Endothelial cell of umbilical vein (primary cell): ENCODE measurements at regions of chr3 and their contacts with region 1.

Region 1: GRCh38 chr3:7309641-7310102 is 448.8 kb downstream of the GRM7 start:
- DNase-seq: peak; percentile 98
- H3K4me3 ChIP-seq: no peak overlapping the region
- H3K27ac ChIP-seq: peak overlapping the region; percentile 96
- H3K4me1 ChIP-seq: peaks cover 55% of the 10 kb centered on the region
- H3K27me3 ChIP-seq: no peaks in the 10 kb centered on the region
- CTCF ChIP-seq: no peak
- POLR2A ChIP-seq: no peak

Region 2: GRCh38 chr3:7285505-7285904 is 24.2 kb before region 1 on chr3:
- CTCF ChIA-PET with region 1: interaction called, 7 read pairs
- POLR2A ChIA-PET with region 1: interaction called, 4 read pairs
- dilution Hi-C with region 1: no loop called
- intact Hi-C with region 1: loop called (anchors 1 kb)
- DNase-seq: peak; percentile 49
- H3K4me3 ChIP-seq: no peak overlapping the region
- H3K27ac ChIP-seq: no peak overlapping the region
- H3K4me1 ChIP-seq: peaks cover 28% of the 10 kb centered on the region
- H3K27me3 ChIP-seq: no peaks in the 10 kb centered on the region
- CTCF ChIP-seq: peak in 1 of 2 donors; percentile 14
- POLR2A ChIP-seq: no peak

Region 3: GRCh38 chr3:7382293-7383010 is 72.8 kb after region 1 on chr3:
- CTCF ChIA-PET with region 1: interaction called, 3 read pairs
- POLR2A ChIA-PET with region 1: no interaction called
- dilution Hi-C with region 1: no loop called
- intact Hi-C with region 1: loop called (anchors 2 kb)
- DNase-seq: peak; percentile 98
- H3K4me3 ChIP-seq: no peak overlapping the region
- H3K27ac ChIP-seq: peak overlapping the region; percentile 57
- H3K4me1 ChIP-seq: peaks cover 18% of the 10 kb centered on the region
- H3K27me3 ChIP-seq: no peaks in the 10 kb centered on the region
- CTCF ChIP-seq: no peak
- POLR2A ChIP-seq: no peak

Region 4: DNA sequence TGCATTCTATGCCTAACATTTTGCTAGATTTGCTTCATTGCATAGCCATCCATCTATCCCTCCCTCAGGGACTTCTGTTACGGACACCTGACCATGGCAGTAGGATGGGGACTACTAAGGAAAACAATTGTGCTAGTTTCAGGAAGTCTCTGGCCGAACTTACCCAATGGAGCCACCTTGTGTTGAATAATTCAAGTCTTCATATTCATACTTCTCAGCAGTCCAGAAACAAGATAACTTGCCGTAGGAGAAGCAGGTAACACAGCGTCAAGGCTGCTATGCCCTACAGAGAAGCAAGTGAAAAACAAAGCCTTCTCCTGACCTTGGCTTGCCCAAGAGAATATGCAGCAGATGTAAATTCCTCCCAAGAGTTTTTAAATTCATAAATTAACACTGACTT is 236.6 kb after region 1 on chr3:
- CTCF ChIA-PET with region 1: no interaction called
- POLR2A ChIA-PET with region 1: no interaction called
- dilution Hi-C with region 1: no loop called
- intact Hi-C with region 1: loop called (anchors 5 kb)
- DNase-seq: peak; percentile 79
- H3K4me3 ChIP-seq: no peak overlapping the region
- H3K27ac ChIP-seq: no peak overlapping the region
- H3K4me1 ChIP-seq: no peaks in the 10 kb centered on the region
- H3K27me3 ChIP-seq: no peaks in the 10 kb centered on the region
- CTCF ChIP-seq: peak; percentile 6 to 13
- POLR2A ChIP-seq: no peak

Region 5: GRCh38 chr3:7707187-7707586 is 397.5 kb after region 1 on chr3:
- CTCF ChIA-PET with region 1: no interaction called
- POLR2A ChIA-PET with region 1: no interaction called
- dilution Hi-C with region 1: no loop called
- intact Hi-C with region 1: loop called (anchors 1 kb)
- DNase-seq: peak; percentile 74
- H3K4me3 ChIP-seq: no peak overlapping the region
- H3K27ac ChIP-seq: peak overlapping the region; percentile 95
- H3K4me1 ChIP-seq: peaks cover 55% of the 10 kb centered on the region
- H3K27me3 ChIP-seq: no peaks in the 10 kb centered on the region
- CTCF ChIP-seq: no peak
- POLR2A ChIP-seq: peak; percentile 22